AG04449 (cell line): ENCODE measurements at regions of chr18 and their contacts with region 1.

Region 1: GRCh38 chr18:59783138-59783537 is 85.9 kb upstream of the CCBE1 start:
- DNase-seq: no peak
- H3K4me3 ChIP-seq: no peak overlapping the region
- CTCF ChIP-seq: peak; percentile 46

Region 2: GRCh38 chr18:59769129-59769865 is 13.8 kb before region 1 on chr18:
- CTCF ChIA-PET with region 1: interaction called, 29 read pairs
- POLR2A ChIA-PET with region 1: no interaction called
- DNase-seq: no peak
- H3K4me3 ChIP-seq: no peak overlapping the region
- CTCF ChIP-seq: no peak